ENCODE measurements at regions of chr12 and their contacts with region 1.

Region 1: GRCh38 chr12:2583091-2583497 is 211.7 kb upstream of the FKBP4 start:
- DNase-seq: peak; percentile 10
- ATAC-seq: peak; percentile 99
- H3K4me3 ChIP-seq: no peak overlapping the region; a peak in 1 of 4 replicates
- H3K27ac ChIP-seq: no peak overlapping the region
- H3K4me1 ChIP-seq: peaks cover 3 to 8% of the 10 kb centered on the region in 2 experiments; a peak in 3 of 4 replicates
- H3K27me3 ChIP-seq: peaks cover 28% of the 10 kb centered on the region
- CTCF ChIP-seq: peak; percentile 66 to 83 (median 81)
- POLR2A ChIP-seq: no peak
- RAD21 ChIP-seq: peak; percentile 92

Region 2: GRCh38 chr12:1634590-1635191 is 948.4 kb before region 1 on chr12:
- CTCF ChIA-PET with region 1: no interaction called
- POLR2A ChIA-PET with region 1: no interaction called
- RAD21 ChIA-PET with region 1: no interaction called
- intact Hi-C with region 1: loop called (anchors 10 kb)
- DNase-seq: peak; percentile 63
- ATAC-seq: peak; percentile 81
- H3K4me3 ChIP-seq: no peak overlapping the region
- H3K27ac ChIP-seq: no peak overlapping the region
- H3K4me1 ChIP-seq: peaks cover 0 to 15% of the 10 kb centered on the region in 2 experiments; a peak in 3 of 4 replicates
- H3K27me3 ChIP-seq: no peaks in the 10 kb centered on the region
- CTCF ChIP-seq: peak; percentile 78 to 93 (median 90)
- POLR2A ChIP-seq: no peak
- RAD21 ChIP-seq: peak; percentile 85

Region 3: DNA sequence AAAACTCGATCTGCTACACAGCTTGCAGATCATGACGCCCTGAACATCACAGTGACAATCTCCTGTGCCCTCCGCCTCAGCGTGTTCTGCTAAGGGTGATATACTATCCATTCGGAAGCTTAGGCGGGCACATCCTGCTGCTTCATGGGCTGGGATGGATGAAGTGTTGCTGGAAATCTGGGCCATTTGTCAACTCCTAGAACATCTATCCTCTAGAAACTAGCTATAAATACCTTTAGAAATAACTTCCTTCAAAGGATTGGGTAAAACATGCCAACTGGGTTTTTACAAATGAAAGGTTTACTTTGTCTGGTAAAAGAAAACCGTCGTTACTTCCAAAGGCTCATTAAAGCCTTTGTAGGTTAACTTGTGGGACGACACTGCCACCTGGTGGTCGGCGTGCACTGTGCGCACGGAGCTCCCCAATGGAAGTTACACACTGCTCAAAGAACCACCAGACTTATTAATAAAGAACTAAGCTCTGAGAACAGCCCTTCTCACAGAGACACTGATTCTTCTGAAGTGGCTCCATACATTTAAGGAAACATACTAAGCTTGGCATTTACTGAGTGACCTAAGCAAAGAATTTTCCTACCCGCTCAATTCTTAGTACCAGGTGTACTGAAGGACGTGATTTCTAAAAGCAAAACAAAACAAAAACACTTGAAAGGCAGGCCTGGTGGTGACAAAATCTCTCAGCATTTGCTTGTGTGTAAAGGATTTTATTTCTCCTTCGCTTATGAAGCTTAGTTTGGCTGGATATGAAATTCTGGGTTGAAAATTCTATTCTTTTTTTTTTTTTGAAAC is 643.1 kb before region 1 on chr12:
- CTCF ChIA-PET with region 1: interaction called, 5 read pairs
- POLR2A ChIA-PET with region 1: no interaction called
- RAD21 ChIA-PET with region 1: no interaction called
- intact Hi-C with region 1: loop called (anchors 5 kb)
- DNase-seq: peak; percentile 52
- ATAC-seq: peak; percentile 95
- H3K4me3 ChIP-seq: no peak overlapping the region
- H3K27ac ChIP-seq: no peak overlapping the region
- H3K4me1 ChIP-seq: no peaks in the 10 kb centered on the region
- H3K27me3 ChIP-seq: no peaks in the 10 kb centered on the region
- CTCF ChIP-seq: peak; percentile 78 to 98 (median 89); a peak in 5 of 6 replicates
- POLR2A ChIP-seq: no peak
- RAD21 ChIP-seq: peak; percentile 87

Region 4: GRCh38 chr12:2057041-2057794 is 525.9 kb before region 1 on chr12:
- CTCF ChIA-PET with region 1: no interaction called
- POLR2A ChIA-PET with region 1: no interaction called
- RAD21 ChIA-PET with region 1: no interaction called
- intact Hi-C with region 1: loop called (anchors 1 kb)
- DNase-seq: peak; percentile 34
- ATAC-seq: peak; percentile 86
- H3K4me3 ChIP-seq: no peak overlapping the region
- H3K27ac ChIP-seq: no peak overlapping the region
- H3K4me1 ChIP-seq: no peaks in the 10 kb centered on the region
- H3K27me3 ChIP-seq: peaks cover 22% of the 10 kb centered on the region; the same call in 1 of the 2 replicates
- CTCF ChIP-seq: peak; percentile 79 to 96 (median 93)
- POLR2A ChIP-seq: no peak
- RAD21 ChIP-seq: peak; percentile 91

Region 5: DNA sequence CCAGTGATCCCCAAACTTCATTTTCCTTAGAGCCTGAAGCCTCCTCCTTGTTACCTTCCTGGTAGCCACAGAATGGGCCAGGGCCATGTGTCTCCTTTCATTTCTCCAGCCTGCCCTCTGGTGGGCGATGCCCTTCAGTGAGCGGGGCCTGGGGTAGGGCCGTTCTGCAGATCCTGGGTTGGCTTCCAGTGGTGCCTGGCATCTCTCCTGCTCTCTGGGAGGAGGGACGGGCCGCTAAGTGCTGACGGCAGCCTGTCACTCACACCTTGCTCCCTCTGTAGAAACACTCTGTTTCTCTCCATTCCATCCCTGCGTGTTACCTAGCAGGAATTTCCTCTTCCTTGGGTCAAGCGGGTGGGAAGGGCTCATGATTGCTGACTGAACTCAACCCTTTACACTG is 298.2 kb before region 1 on chr12:
- CTCF ChIA-PET with region 1: interaction called, 3 read pairs
- POLR2A ChIA-PET with region 1: no interaction called
- RAD21 ChIA-PET with region 1: no interaction called
- intact Hi-C with region 1: loop called (anchors 10 kb)
- DNase-seq: peak; percentile 37
- ATAC-seq: peak; percentile 100
- H3K4me3 ChIP-seq: no peak overlapping the region
- H3K27ac ChIP-seq: no peak overlapping the region
- H3K4me1 ChIP-seq: peaks cover 0 to 6% of the 10 kb centered on the region in 2 experiments; a peak in 1 of 4 replicates
- H3K27me3 ChIP-seq: no peaks in the 10 kb centered on the region
- CTCF ChIP-seq: peak; percentile 66 to 83 (median 80)
- POLR2A ChIP-seq: no peak
- RAD21 ChIP-seq: peak; percentile 77

Region 6: DNA sequence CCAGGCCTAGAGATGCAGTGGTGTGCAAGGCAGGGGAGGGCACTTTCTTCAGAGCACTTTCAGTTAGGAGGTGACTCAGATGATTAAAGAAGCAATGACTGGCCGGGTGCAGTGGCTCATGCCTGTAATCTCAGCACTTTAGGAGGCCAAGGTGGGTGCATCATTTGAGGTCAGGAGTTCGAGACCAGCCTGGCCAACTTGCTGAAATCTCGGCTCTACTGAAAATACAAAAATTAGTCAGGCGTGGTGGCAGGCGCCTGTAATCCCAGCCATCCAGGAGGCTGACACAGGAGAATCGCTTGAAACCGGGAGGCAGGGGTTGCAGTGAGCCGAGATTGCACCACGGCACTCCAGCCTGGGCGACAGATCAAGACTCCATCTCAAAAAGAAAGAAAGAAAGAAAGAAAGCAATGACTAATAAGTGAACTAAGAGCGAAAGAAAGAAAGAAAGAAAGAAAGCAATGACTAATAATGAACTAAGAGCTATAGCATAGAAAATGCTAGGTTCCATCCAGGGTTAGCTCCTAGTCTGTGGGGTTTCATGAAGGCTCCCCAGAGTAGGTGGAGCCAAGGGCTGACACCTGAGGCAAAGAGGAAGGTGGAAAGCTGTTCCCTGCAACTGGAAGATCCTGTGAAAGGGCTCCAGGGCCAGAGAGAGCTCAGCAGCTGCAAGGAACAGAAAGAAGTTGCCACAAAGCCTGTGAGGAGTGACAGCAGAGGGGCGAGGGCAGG is 195.8 kb before region 1 on chr12:
- CTCF ChIA-PET with region 1: interaction called, 4 read pairs
- POLR2A ChIA-PET with region 1: no interaction called
- RAD21 ChIA-PET with region 1: no interaction called
- intact Hi-C with region 1: loop called (anchors 10 kb)
- DNase-seq: no peak
- ATAC-seq: no peak
- H3K4me3 ChIP-seq: no peak overlapping the region
- H3K27ac ChIP-seq: no peak overlapping the region
- H3K4me1 ChIP-seq: peaks cover 0 to 10% of the 10 kb centered on the region in 2 experiments; a peak in 2 of 4 replicates
- H3K27me3 ChIP-seq: peaks cover 5% of the 10 kb centered on the region; the same call in 1 of the 2 replicates
- CTCF ChIP-seq: no peak
- POLR2A ChIP-seq: no peak
- RAD21 ChIP-seq: no peak

Measured in HCT116 (cell line).